ENCODE measurements at regions of chr2 and their contacts with region 1.

Region 1: DNA sequence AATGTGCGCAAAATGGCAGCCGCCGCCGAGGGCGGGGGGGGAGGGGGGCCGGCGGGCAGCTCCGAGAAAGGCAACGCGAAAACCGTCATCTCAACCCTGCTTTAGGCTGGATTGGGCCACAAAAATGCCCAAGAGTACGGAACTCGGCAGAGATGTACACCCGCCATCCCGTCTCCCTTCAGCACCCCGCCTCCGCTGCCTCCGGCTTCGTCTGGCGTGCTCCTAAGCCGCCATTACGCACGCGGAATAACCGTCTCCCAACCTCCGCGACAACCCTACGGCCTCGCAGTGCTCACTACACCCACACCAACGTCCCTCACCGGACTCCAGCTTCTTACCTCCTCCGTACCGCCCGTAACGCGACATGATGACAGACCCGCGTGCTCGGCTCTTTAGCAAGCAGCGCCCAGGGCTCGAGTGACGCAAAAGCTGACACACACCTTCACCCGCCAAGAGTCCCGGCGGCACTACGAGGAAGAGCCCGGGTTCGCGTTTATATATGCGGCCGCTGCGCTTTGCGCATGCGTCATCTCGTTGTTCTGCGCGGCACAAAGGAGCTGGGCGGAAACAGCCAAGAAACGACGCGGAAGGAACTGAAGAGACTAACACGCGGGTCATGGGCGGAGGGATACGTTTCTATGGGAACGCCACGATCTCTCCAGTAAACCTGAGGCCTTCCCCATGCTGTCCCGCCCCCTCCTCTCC is at the start of gene SRSF7:
- DNase-seq: peak; percentile 97
- ATAC-seq: peak; percentile 89
- H3K4me3 Mint-ChIP-seq: peak within 1 kb of the TSS; percentile 100
- H3K27ac Mint-ChIP-seq: peak within 1 kb of the TSS; percentile 100
- H3K4me1 Mint-ChIP-seq: peaks cover 44% of the 10 kb centered on the region
- H3K27me3 Mint-ChIP-seq: no peaks in the 10 kb centered on the region
- CTCF ChIP-seq: no peak
- total RNA-seq, gene SRSF7: 299 to 349 TPM (median 342 TPM) in 3 replicates

Region 2: GRCh38 chr2:38360177-38360576 is 390.9 kb before region 1 on chr2:
- CTCF ChIA-PET with region 1: no interaction called
- POLR2A ChIA-PET with region 1: interaction called, 14 read pairs
- DNase-seq: no peak
- ATAC-seq: no peak
- H3K4me3 Mint-ChIP-seq: no peak overlapping the region
- H3K27ac Mint-ChIP-seq: no peak overlapping the region
- H3K4me1 Mint-ChIP-seq: peaks cover 2% of the 10 kb centered on the region; the same call in 1 of the 2 replicates
- H3K27me3 Mint-ChIP-seq: no peaks in the 10 kb centered on the region
- CTCF ChIP-seq: no peak

Region 3: GRCh38 chr2:38602732-38603401 is 148.2 kb before region 1 on chr2 and contains the start of gene HNRNPLL:
- CTCF ChIA-PET with region 1: interaction called, 4 read pairs
- POLR2A ChIA-PET with region 1: interaction called, 55 read pairs
- DNase-seq: peak; percentile 99
- ATAC-seq: peak; percentile 88
- H3K4me3 Mint-ChIP-seq: peak within 1 kb of the TSS; percentile 90
- H3K27ac Mint-ChIP-seq: peak within 1 kb of the TSS; percentile 96
- H3K4me1 Mint-ChIP-seq: peaks cover 48% of the 10 kb centered on the region
- H3K27me3 Mint-ChIP-seq: no peaks in the 10 kb centered on the region
- CTCF ChIP-seq: no peak
- total RNA-seq, gene HNRNPLL: 63.1 to 66.4 TPM (median 65.3 TPM) in 3 replicates

Region 4: DNA sequence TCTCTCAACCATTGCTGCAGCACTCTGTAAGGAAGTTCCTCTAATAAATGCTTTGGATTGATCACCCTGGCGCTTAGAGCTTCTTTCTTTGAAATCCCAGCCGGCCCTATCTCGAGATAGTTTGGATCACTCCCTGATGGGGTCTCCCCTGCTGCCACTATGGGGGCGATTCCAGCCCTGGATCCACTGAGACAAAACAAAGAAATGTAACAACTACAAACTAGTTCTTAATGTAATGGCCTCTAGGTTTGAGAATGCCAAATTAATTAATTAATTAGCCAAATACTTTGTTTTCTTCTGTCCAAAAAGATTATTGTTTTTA is 15.1 kb before region 1 on chr2:
- CTCF ChIA-PET with region 1: interaction called, 4 read pairs
- POLR2A ChIA-PET with region 1: interaction called, 16 read pairs
- DNase-seq: no peak
- ATAC-seq: no peak
- H3K4me3 Mint-ChIP-seq: no peak overlapping the region
- H3K27ac Mint-ChIP-seq: no peak overlapping the region
- H3K4me1 Mint-ChIP-seq: peaks cover 22% of the 10 kb centered on the region
- H3K27me3 Mint-ChIP-seq: peaks cover 3% of the 10 kb centered on the region; the same call in 1 of the 2 replicates
- CTCF ChIP-seq: no peak

Region 5: GRCh38 chr2:38875576-38876367 is 124.7 kb after region 1 on chr2 and contains the starts of genes DHX57 and MORN2:
- CTCF ChIA-PET with region 1: no interaction called
- POLR2A ChIA-PET with region 1: interaction called, 11 read pairs
- DNase-seq: peak; percentile 87
- ATAC-seq: peak; percentile 99
- H3K4me3 Mint-ChIP-seq: peak within 1 kb of the TSS; percentile 87
- H3K27ac Mint-ChIP-seq: peak within 1 kb of the TSS; percentile 70
- H3K4me1 Mint-ChIP-seq: peaks cover 14% of the 10 kb centered on the region
- H3K27me3 Mint-ChIP-seq: no peaks in the 10 kb centered on the region
- CTCF ChIP-seq: no peak
- total RNA-seq, gene DHX57: 22.5 to 30.3 TPM (median 26.2 TPM) in 3 replicates
- total RNA-seq, gene MORN2: 5.9 to 8.0 TPM (median 7.4 TPM) in 3 replicates